ENCODE measurements at regions of chr18 and their contacts with region 1.

Region 1: GRCh38 chr18:54828281-54828881 is at the start of gene RAB27B:
- DNase-seq: peak; percentile 94
- H3K4me3 Mint-ChIP-seq: peak within 1 kb of the TSS; percentile 92
- H3K27ac Mint-ChIP-seq: peak within 1 kb of the TSS; percentile 75
- H3K4me1 Mint-ChIP-seq: peaks cover 60% of the 10 kb centered on the region
- H3K27me3 Mint-ChIP-seq: no peaks in the 10 kb centered on the region
- CTCF ChIP-seq: no peak
- total RNA-seq, gene RAB27B: 32.2 and 73.5 TPM in 2 replicates

Region 2: DNA sequence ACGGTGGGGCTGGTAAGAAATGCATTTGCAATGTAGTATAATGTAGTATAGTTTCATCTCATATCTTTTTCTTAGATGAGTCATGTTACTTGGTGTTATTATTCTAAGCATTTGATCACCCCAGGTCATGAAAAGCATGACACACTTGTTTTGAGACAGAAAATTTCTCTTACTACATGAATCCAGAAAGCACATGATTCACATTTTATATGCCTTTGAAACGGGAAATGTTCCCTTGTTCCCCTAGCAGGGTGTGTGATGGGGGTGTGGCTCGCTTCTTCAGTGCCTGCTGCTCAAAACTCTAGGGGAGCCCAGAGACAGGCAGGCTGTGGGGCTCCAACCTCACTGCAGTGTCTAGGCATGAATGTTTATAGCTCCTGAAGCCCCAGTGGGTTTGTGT is 116.1 kb before region 1 on chr18:
- CTCF ChIA-PET with region 1: interaction called, 3 read pairs
- POLR2A ChIA-PET with region 1: interaction called, 33 read pairs
- intact Hi-C with region 1: loop called (anchors 10 kb)
- DNase-seq: peak; percentile 90
- H3K4me3 Mint-ChIP-seq: no peak overlapping the region
- H3K27ac Mint-ChIP-seq: peak overlapping the region; percentile 14
- H3K4me1 Mint-ChIP-seq: peaks cover 23% of the 10 kb centered on the region
- H3K27me3 Mint-ChIP-seq: no peaks in the 10 kb centered on the region
- CTCF ChIP-seq: no peak

Region 3: DNA sequence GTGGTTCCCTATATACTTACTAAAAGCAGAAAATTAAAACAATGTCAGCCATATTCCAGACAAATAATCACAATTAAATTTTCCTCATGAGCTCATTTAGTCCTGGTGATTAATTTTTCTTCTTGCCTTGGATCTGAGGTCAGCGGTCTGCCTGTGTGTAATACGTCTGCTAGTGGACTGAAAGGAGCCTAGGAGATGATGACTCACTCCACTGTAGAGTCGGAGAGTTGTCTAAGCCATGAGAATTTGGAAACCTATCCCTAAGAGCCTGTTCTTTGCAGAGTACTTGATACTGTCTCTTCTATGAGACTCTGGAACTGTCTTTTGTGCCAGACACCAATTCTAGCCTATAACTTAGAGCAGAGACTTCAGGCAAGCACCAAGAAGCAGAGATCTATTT is 94.3 kb before region 1 on chr18:
- CTCF ChIA-PET with region 1: no interaction called
- POLR2A ChIA-PET with region 1: interaction called, 7 read pairs
- intact Hi-C with region 1: loop called (anchors 5 kb)
- DNase-seq: peak; percentile 91
- H3K4me3 Mint-ChIP-seq: no peak overlapping the region
- H3K27ac Mint-ChIP-seq: peak overlapping the region; percentile 61
- H3K4me1 Mint-ChIP-seq: peaks cover 15% of the 10 kb centered on the region
- H3K27me3 Mint-ChIP-seq: no peaks in the 10 kb centered on the region
- CTCF ChIP-seq: no peak

Region 4: DNA sequence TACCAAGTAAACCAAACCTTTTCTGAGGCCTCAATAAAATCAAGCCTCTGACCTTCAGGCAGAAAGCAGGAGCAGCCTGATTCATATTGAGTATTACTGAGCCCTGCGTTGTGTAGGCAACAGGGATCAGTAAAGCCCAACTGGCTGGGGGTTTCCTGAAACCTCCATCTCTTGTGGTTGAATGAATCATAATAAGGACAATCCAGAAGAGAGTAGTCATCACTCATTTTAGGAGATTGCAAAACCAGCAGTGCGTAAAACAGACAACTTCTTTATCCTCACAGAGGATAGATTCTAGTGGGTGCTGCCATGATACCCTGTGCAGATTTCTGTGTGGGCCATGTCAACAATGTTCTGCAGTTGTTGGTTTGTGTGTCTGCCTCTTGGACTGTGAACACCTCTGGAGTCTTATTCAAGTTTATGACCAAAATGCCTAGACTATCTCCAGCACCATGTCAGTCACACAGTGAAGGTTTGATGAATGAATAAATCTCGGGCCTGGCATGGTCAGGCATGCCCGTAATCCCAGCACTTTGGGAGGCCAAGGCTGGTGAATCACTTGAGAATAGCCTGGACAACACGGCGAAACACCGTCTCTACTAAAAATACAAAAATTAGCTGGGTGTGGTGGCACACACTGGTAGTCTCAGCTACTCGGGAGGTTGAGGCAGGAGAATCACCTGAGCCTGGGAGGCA is 52.0 kb before region 1 on chr18:
- CTCF ChIA-PET with region 1: interaction called, 6 read pairs
- POLR2A ChIA-PET with region 1: interaction called, 36 read pairs
- intact Hi-C with region 1: loop called (anchors 1 kb)
- DNase-seq: peak; percentile 98
- H3K4me3 Mint-ChIP-seq: peak overlapping the region; percentile 16
- H3K27ac Mint-ChIP-seq: peak overlapping the region; percentile 92
- H3K4me1 Mint-ChIP-seq: peaks cover 50% of the 10 kb centered on the region
- H3K27me3 Mint-ChIP-seq: no peaks in the 10 kb centered on the region
- CTCF ChIP-seq: no peak

Region 5: DNA sequence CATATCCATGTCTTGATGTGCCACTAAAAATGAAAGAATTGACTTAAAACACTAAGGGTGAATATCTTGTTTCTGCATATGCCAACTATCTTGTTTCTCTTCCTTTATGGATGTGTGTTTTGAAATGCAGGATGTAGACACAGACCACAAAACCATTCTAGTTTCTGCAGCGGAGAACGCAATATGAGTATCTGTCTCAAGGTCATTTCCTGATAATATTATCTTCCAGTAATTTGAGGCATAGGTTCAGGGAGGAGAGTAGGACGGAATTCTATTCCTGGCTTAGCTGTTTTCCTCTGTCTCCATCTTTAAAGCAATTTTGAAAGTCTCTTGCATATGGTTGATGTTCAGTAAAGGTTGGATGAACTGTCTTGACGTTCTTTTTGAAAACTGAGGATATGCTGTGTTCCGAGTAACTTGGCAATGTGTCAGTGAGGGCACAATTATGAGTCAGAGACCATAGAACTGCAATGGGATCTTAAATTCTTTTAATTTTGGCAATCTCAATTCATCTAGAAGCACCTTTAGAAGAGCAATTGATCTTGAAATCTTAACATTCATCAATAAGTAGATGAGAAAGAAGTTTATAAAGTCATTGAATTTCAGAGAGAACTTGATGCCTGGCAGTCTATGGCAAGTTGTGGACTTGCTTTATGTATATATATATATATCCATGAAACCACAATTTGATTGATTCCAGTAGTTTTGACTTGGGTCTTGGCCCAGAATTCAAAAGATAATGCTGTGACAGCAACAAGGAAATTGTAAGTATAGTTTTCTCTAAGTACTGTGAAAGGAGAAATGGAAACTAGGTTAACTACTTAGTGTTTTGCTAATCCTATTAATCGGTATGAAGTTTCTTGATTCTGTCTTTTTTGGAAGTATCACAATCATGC is 24.6 kb after region 1 on chr18:
- CTCF ChIA-PET with region 1: interaction called, 4 read pairs
- POLR2A ChIA-PET with region 1: interaction called, 19 read pairs
- intact Hi-C with region 1: no loop called
- DNase-seq: peak; percentile 66
- H3K4me3 Mint-ChIP-seq: peak overlapping the region; percentile 56
- H3K27ac Mint-ChIP-seq: peak overlapping the region; percentile 87
- H3K4me1 Mint-ChIP-seq: peaks cover 19% of the 10 kb centered on the region
- H3K27me3 Mint-ChIP-seq: no peaks in the 10 kb centered on the region
- CTCF ChIP-seq: no peak

Region 6: DNA sequence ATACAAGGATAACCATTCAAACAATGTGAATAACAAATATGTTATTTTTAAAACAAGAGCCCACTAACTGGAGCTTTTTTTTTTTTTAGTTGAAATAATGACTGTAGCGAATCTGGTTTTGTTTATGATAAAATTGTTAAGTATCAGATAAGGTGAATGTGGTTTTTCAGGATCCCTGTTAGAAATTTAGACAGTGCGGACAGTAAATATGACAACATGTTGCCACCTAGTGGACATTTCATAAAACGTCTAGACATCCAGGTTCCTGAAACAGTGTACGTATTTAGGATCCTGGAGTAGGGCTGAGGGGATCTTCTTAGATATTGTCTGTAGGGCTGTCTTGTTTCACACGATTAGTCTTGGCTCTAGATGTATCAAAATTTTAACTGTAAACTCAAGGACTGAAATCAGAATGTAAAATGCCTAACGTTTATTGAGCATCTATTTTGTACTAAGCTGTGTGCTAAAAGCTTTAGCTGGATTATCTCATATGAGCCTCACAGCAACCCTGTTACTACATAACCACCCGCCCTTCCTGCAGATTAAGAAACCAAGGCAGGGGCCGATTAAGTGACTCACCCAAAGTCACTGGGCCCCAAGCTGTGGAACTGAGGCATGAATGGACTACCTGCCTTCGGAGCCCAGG is 154.8 kb after region 1 on chr18:
- CTCF ChIA-PET with region 1: interaction called, 3 read pairs
- POLR2A ChIA-PET with region 1: interaction called, 3 read pairs
- intact Hi-C with region 1: loop called (anchors 2 kb)
- DNase-seq: peak; percentile 73
- H3K4me3 Mint-ChIP-seq: no peak overlapping the region
- H3K27ac Mint-ChIP-seq: no peak overlapping the region
- H3K4me1 Mint-ChIP-seq: no peaks in the 10 kb centered on the region
- H3K27me3 Mint-ChIP-seq: no peaks in the 10 kb centered on the region
- CTCF ChIP-seq: peak; percentile 74

Measured in MCF 10A (cell line).